ENCODE measurements at regions of chr18 and their contacts with region 1.

Region 1: GRCh38 chr18:47893939-47894699 is 36.3 kb downstream of the SMAD2 start:
- DNase-seq: no peak
- H3K4me3 ChIP-seq: no peak overlapping the region
- H3K27ac ChIP-seq: no peak overlapping the region
- H3K4me1 ChIP-seq: peaks cover 0 to 8% of the 10 kb centered on the region in 2 donors
- H3K27me3 ChIP-seq: no peaks in the 10 kb centered on the region
- CTCF ChIP-seq: no peak
- POLR2A ChIP-seq: no peak

Region 2: GRCh38 chr18:47184419-47185050 is 709.6 kb before region 1 on chr18:
- intact Hi-C with region 1: loop called (anchors 5 kb)
- DNase-seq: no peak
- H3K4me3 ChIP-seq: no peak overlapping the region
- H3K27ac ChIP-seq: no peak overlapping the region
- H3K4me1 ChIP-seq: no peaks in the 10 kb centered on the region
- H3K27me3 ChIP-seq: no peaks in the 10 kb centered on the region
- CTCF ChIP-seq: no peak
- POLR2A ChIP-seq: no peak

Region 3: DNA sequence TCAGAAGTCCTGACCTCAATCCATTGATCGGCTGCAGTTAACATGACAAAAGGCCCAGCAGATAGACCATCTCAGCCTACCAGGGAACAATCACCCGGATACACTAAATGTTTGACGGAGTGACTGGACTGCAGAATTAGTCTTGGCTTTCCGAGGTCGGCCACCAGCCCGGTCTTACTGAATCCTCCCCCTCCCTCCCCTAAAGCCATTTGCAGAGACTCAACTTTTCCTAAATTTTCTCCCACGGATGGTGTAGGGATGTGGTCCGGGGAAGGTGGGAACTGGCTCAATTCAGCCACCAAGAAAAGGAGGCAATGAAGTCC is 332.8 kb before region 1 on chr18:
- intact Hi-C with region 1: no loop called
- DNase-seq: no peak
- H3K4me3 ChIP-seq: no peak overlapping the region
- H3K27ac ChIP-seq: no peak overlapping the region
- H3K4me1 ChIP-seq: no peaks in the 10 kb centered on the region
- H3K27me3 ChIP-seq: peaks cover 0 to 16% of the 10 kb centered on the region in 2 donors
- CTCF ChIP-seq: no peak
- POLR2A ChIP-seq: no peak

Region 4: GRCh38 chr18:47919916-47920315 is 25.8 kb after region 1 on chr18:
- intact Hi-C with region 1: loop called (anchors 2 kb)
- DNase-seq: no peak
- H3K4me3 ChIP-seq: no peak overlapping the region
- H3K27ac ChIP-seq: no peak overlapping the region
- H3K4me1 ChIP-seq: no peaks in the 10 kb centered on the region
- H3K27me3 ChIP-seq: no peaks in the 10 kb centered on the region
- CTCF ChIP-seq: no peak
- POLR2A ChIP-seq: no peak

Region 5: GRCh38 chr18:48050161-48050560 is 156.0 kb after region 1 on chr18:
- intact Hi-C with region 1: no loop called
- DNase-seq: no peak
- H3K4me3 ChIP-seq: no peak overlapping the region
- H3K27ac ChIP-seq: peak overlapping the region; percentile 70 to 86
- H3K4me1 ChIP-seq: no peaks in the 10 kb centered on the region
- H3K27me3 ChIP-seq: no peaks in the 10 kb centered on the region
- CTCF ChIP-seq: no peak
- POLR2A ChIP-seq: no peak

Region 6: DNA sequence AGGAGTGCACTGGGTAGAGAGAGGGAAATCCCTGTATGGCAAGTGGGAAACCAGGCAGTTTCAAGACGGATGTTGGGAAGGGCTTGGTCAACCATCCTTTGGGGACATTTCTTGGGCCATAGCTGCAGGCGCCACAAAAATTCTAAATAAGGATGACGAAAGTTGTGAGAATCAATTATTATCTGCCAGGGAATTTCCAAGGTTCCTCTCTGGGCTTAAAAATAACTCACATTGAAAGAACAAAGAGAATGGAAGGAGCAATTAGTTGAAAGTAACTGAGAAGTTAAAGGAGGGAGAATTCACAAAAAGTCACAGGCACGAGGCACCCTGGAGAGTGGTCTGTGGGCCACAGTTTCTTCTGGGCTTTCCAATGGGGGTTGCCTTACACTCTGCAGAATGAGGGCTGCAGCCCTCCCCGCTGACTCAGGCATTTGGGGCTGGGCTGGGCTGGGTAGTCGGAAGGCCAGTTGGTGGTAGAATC is 860.9 kb after region 1 on chr18:
- intact Hi-C with region 1: no loop called
- DNase-seq: no peak
- H3K4me3 ChIP-seq: no peak overlapping the region
- H3K27ac ChIP-seq: peak overlapping the region; percentile 70 to 78
- H3K4me1 ChIP-seq: peaks cover 5 to 20% of the 10 kb centered on the region in 2 donors
- H3K27me3 ChIP-seq: no peaks in the 10 kb centered on the region
- CTCF ChIP-seq: no peak
- POLR2A ChIP-seq: no peak